A673 (cell line): ENCODE measurements at regions of chr6 and their contacts with region 1.

Region 1: DNA sequence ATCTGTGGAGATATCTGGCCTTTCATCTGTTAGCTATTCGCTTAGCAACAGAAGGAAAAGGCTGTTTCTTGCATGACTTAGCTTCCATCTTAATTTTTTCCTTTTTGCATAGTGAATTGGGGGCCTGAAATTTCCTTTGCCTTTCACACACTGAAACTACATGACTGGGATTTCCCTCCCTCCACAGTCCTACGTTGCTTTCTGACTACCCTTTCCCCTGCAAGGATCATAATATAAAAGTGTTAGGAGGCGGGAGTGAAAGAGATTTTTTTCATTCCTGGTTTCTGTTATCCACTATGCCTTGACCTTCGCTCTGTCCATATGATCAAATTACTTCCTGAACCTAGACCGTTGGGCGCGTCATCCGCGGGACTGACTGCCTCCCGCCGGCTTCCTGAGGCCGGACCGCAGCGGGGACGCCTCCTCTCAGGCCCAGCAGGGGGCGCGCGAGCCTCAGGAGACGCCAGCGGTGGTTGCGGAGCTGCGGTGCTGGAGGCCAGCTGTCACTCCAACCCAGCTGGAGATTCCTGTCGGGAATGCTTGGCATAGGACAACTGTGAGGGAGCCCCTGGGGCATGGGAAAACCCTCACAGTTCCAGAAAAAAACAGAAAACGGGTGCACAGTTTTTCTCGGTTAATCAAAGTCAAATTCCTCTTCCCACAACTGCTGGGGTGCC is 55.6 kb downstream of the MEP1A start:
- DNase-seq: peak; percentile 81
- H3K4me3 ChIP-seq: no peak overlapping the region
- H3K27ac ChIP-seq: no peak overlapping the region
- H3K4me1 ChIP-seq: no peaks in the 10 kb centered on the region
- H3K27me3 ChIP-seq: no peaks in the 10 kb centered on the region
- CTCF ChIP-seq: peak; percentile 97

Region 2: GRCh38 chr6:46234156-46234556 is 614.7 kb before region 1 on chr6:
- CTCF ChIA-PET with region 1: no interaction called
- POLR2A ChIA-PET with region 1: no interaction called
- intact Hi-C with region 1: no loop called
- DNase-seq: no peak
- H3K4me3 ChIP-seq: no peak overlapping the region
- H3K27ac ChIP-seq: no peak overlapping the region
- H3K4me1 ChIP-seq: no peaks in the 10 kb centered on the region
- H3K27me3 ChIP-seq: peaks cover 23% of the 10 kb centered on the region
- CTCF ChIP-seq: no peak

Region 3: DNA sequence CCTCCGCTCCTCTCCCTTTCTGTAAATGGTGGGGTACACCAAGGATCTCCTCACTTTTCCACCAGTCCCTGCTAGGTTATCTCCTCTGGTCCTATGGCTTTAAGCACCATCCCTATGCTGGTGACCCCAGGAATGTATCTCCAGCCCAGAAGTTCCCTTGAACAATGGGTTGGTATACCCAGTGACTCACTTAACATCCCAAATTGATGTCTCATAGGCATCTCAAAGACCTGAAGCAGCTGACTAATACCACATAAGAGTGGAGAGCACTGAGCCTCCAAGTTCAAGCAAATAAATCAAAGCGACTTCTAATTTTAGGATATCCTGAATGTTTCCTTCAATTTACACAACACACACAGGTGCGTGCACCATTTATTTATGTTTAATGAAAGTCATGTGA is 145.0 kb after region 1 on chr6:
- CTCF ChIA-PET with region 1: interaction called, 4 read pairs
- POLR2A ChIA-PET with region 1: no interaction called
- intact Hi-C with region 1: loop called (anchors 2 kb)
- DNase-seq: no peak
- H3K4me3 ChIP-seq: no peak overlapping the region
- H3K27ac ChIP-seq: no peak overlapping the region
- H3K4me1 ChIP-seq: no peaks in the 10 kb centered on the region
- H3K27me3 ChIP-seq: peaks cover 30% of the 10 kb centered on the region
- CTCF ChIP-seq: no peak

Region 4: GRCh38 chr6:47047479-47048407 is 198.9 kb after region 1 on chr6:
- CTCF ChIA-PET with region 1: no interaction called
- POLR2A ChIA-PET with region 1: no interaction called
- intact Hi-C with region 1: loop called (anchors 2 kb)
- DNase-seq: peak; percentile 79
- H3K4me3 ChIP-seq: no peak overlapping the region
- H3K27ac ChIP-seq: no peak overlapping the region
- H3K4me1 ChIP-seq: no peaks in the 10 kb centered on the region
- H3K27me3 ChIP-seq: peaks cover 27% of the 10 kb centered on the region
- CTCF ChIP-seq: peak; percentile 85

Region 5: GRCh38 chr6:47309291-47310130 is 460.7 kb after region 1 on chr6 and contains the start of gene TNFRSF21:
- CTCF ChIA-PET with region 1: no interaction called
- POLR2A ChIA-PET with region 1: no interaction called
- intact Hi-C with region 1: loop called (anchors 5 kb)
- DNase-seq: peak; percentile 94
- H3K4me3 ChIP-seq: peak within 1 kb of the TSS; percentile 67
- H3K27ac ChIP-seq: peak within 1 kb of the TSS; percentile 69
- H3K4me1 ChIP-seq: peaks cover 5% of the 10 kb centered on the region
- H3K27me3 ChIP-seq: peaks cover 3% of the 10 kb centered on the region
- CTCF ChIP-seq: peak; percentile 94
- total RNA-seq, gene TNFRSF21: 31.3 and 36.0 TPM in 2 replicates